Endothelial cell of umbilical vein (primary cell): ENCODE measurements at regions of chr17 and their contacts with region 1.

Region 1: GRCh38 chr17:42388381-42389134 is at the start of gene STAT3:
- DNase-seq: peak; percentile 100
- H3K4me3 ChIP-seq: peak within 1 kb of the TSS; percentile 41 to 89 (median 55)
- H3K27ac ChIP-seq: peak within 1 kb of the TSS; percentile 98
- H3K4me1 ChIP-seq: peaks cover 21% of the 10 kb centered on the region
- H3K27me3 ChIP-seq: no peaks in the 10 kb centered on the region
- CTCF ChIP-seq: no peak
- POLR2A ChIP-seq: peak; percentile 84
- total RNA-seq, gene STAT3: 108 and 124 TPM in 2 replicates

Region 2: DNA sequence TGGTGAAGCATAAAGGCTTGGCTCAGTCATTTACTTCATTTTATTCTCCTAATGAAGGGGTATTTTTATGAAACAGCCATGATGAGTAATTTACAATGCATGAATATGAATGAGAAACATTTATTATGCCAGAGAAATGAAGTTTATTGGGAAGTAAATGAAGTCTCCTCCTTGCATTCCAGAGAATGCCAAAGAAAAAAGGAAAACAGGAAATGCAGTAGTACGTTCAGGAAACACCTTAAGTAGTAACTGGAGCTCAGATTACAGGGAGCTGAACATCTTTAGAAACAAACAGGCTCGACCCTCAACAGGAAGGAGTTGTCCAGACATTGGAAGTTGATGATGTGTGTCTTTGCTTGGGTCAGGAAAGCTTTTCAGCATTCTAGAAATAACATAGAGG is 1011.0 kb before region 1 on chr17:
- CTCF ChIA-PET with region 1: no interaction called
- POLR2A ChIA-PET with region 1: no interaction called
- dilution Hi-C with region 1: no loop called
- intact Hi-C with region 1: no loop called
- DNase-seq: peak; percentile 33
- H3K4me3 ChIP-seq: no peak overlapping the region
- H3K27ac ChIP-seq: no peak overlapping the region
- H3K4me1 ChIP-seq: no peaks in the 10 kb centered on the region
- H3K27me3 ChIP-seq: no peaks in the 10 kb centered on the region
- CTCF ChIP-seq: no peak
- POLR2A ChIP-seq: no peak

Region 3: DNA sequence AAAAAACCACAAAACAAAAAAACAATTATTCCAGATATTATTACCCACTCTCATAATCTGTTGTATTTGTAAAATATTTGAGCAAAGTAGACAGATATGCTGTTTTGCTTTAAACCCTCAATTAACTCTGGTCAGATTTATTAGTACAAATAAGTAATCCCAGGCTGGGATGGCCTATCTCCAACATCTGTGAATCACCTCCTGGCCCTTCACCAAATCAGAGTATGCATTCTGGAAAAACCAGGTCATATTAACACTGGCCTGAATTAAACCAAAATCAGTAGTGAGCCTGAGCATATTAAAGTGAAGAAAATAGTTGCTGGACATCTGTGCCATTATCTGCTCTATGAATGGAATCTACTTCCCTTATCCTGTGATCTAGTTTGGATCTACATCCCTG is 41.4 kb before region 1 on chr17:
- CTCF ChIA-PET with region 1: no interaction called
- POLR2A ChIA-PET with region 1: no interaction called
- dilution Hi-C with region 1: no loop called
- intact Hi-C with region 1: loop called (anchors 5 kb)
- DNase-seq: peak; percentile 90
- H3K4me3 ChIP-seq: no peak overlapping the region
- H3K27ac ChIP-seq: peak overlapping the region; percentile 51
- H3K4me1 ChIP-seq: peaks cover 21% of the 10 kb centered on the region
- H3K27me3 ChIP-seq: no peaks in the 10 kb centered on the region
- CTCF ChIP-seq: no peak
- POLR2A ChIP-seq: no peak

Region 4: GRCh38 chr17:42365136-42365535 is 23.4 kb before region 1 on chr17:
- CTCF ChIA-PET with region 1: no interaction called
- POLR2A ChIA-PET with region 1: no interaction called
- dilution Hi-C with region 1: no loop called
- intact Hi-C with region 1: no loop called
- DNase-seq: peak; percentile 32
- H3K4me3 ChIP-seq: no peak overlapping the region
- H3K27ac ChIP-seq: no peak overlapping the region
- H3K4me1 ChIP-seq: no peaks in the 10 kb centered on the region
- H3K27me3 ChIP-seq: no peaks in the 10 kb centered on the region
- CTCF ChIP-seq: no peak
- POLR2A ChIP-seq: no peak

Region 5: DNA sequence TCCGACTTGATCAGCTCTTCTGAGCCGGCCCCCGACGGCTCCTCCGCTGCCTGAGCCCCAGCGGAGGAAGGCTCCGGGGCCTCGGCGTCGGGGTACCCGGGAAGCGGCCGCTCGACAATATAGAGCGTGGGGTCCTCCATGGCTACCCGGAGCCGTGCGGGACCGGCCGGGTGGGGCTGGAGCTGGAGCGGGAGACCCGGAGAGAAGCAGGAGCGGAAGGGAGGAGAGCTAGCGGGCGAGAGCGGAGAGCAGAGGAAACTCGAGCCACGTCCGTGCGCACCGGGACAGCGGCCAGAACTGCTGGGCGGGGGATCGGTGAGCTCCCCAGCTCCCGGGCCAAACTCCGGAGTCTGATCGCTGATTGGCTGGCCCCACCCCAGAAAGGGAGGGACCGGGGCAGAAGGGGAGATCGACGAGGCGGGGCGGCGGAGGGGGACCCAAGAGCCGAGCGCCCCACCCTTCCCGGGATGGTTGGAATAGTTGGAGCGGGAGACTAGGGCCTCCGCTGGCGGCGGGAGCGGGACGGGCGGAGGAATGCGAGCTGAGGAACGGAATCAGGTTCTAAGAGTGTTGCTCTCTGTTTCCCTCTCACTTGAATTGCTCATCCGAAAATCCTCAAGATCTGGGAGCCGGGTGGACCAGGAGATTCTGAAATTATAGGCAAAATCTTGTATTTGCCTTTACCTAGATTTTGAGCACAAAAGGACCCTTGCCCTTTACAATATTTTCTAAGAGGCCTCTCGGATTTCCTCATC is 34.6 kb after region 1 on chr17 and contains the start of gene CAVIN1:
- CTCF ChIA-PET with region 1: interaction called, 5 read pairs
- POLR2A ChIA-PET with region 1: interaction called, 7 read pairs
- dilution Hi-C with region 1: no loop called
- intact Hi-C with region 1: loop called (anchors 1 kb)
- DNase-seq: peak; percentile 95
- H3K4me3 ChIP-seq: peak within 1 kb of the TSS; percentile 67 to 84 (median 79)
- H3K27ac ChIP-seq: peak within 1 kb of the TSS; percentile 80
- H3K4me1 ChIP-seq: peaks cover 24% of the 10 kb centered on the region
- H3K27me3 ChIP-seq: no peaks in the 10 kb centered on the region
- CTCF ChIP-seq: no peak
- POLR2A ChIP-seq: peak; percentile 99
- total RNA-seq, gene CAVIN1: 663 and 684 TPM in 2 replicates